ENCODE measurements at regions of chr7 and their contacts with region 1.

Region 1: DNA sequence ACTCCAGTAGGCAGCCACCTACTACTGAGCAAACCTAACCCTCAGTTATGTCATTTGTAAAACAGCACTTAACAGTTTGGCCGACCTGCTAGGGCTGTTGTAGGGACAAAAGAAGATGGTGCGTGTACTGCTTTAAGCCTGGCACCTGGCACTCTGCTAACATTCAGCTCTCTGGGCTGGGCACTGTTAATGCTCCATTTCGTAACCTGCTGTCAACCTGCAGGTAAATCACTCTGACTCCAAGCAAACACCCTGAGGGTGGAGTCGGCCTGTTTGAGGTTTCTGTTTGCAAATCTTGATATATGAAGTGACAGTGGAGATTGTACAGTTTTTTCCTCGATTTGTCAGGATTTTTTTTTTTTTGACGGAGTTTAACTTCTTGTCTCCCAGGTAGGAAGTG is 7.3 kb downstream of the ZKSCAN1 start:
- DNase-seq: peak; percentile 42 to 87
- H3K4me3 ChIP-seq: no peak overlapping the region
- H3K27ac ChIP-seq: no peak overlapping the region
- H3K4me1 ChIP-seq: peaks cover 25% of the 10 kb centered on the region
- H3K27me3 ChIP-seq: no peaks in the 10 kb centered on the region
- CTCF ChIP-seq: no peak

Region 2: GRCh38 chr7:99918959-99919813 is 103.5 kb before region 1 on chr7 and contains the start of gene TRIM4:
- CTCF ChIA-PET with region 1: interaction called, 11 read pairs
- POLR2A ChIA-PET with region 1: no interaction called
- intact Hi-C with region 1: no loop called
- DNase-seq: peak; percentile 79 to 91
- H3K4me3 ChIP-seq: peak within 1 kb of the TSS; percentile 97
- H3K27ac ChIP-seq: peak within 1 kb of the TSS; percentile 65
- H3K4me1 ChIP-seq: peaks cover 16% of the 10 kb centered on the region
- H3K27me3 ChIP-seq: no peaks in the 10 kb centered on the region
- CTCF ChIP-seq: no peak; the same call in 1 of the 2 replicates
- total RNA-seq, gene TRIM4: 34.0 and 35.8 TPM in 2 replicates

Region 3: GRCh38 chr7:99969298-99969697 is 53.4 kb before region 1 on chr7:
- CTCF ChIA-PET with region 1: no interaction called
- POLR2A ChIA-PET with region 1: no interaction called
- intact Hi-C with region 1: no loop called
- DNase-seq: no peak
- H3K4me3 ChIP-seq: no peak overlapping the region
- H3K27ac ChIP-seq: no peak overlapping the region
- H3K4me1 ChIP-seq: no peaks in the 10 kb centered on the region
- H3K27me3 ChIP-seq: peaks cover 51% of the 10 kb centered on the region
- CTCF ChIP-seq: no peak